ENCODE measurements at regions of chr11 and their contacts with region 1.

Region 1: DNA sequence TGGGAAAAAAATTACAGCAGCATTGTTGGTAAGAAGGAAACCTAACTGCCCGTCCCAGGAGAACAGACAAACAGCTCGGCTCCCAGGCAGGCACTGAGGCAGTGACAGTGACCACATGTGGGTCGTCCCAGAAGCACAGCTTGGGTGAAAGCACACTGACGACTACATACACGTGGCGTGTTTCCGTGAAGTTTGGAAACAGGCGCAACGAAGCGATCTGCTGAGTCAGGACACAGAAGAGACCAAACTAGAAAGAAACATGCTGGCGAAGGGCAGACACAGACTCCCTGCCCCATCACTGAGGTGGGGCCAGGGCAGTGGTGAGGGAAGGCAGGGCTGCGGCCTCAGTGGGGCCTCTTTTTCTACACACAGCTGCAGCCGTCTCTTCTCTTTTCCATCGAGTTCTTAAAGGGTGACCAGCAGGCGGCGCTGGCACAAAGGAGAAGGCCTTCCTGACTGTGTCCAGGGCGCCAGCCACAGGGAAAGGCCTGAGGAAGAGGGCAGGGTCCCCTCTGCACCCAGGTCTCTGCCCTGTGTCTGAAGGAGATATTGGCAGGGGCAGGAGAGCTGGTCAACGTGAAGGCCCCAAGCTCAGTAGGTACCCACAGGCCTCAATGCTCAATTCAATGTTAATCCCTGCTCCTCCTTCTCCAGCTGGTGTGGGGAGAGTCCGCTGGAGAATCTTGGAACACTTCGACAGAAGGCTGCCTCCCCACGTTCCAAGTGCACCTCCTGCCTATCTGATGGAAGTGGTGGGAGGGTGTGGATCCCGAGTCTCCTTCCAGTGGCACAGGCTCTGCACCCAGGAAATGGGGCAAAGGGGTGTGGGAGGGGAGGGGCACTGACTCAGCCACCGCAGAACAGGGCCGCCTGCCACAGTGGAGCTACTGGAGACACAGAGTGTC is 19.9 kb downstream of the CARS1 start:
- DNase-seq: peak; percentile 66 to 76 (median 72)
- H3K4me3 ChIP-seq: peak overlapping the region in 1 of 3 experiments; percentile 57
- H3K4me3 Mint-ChIP-seq: peak overlapping the region; percentile 67 to 77
- H3K27ac ChIP-seq: peak overlapping the region; percentile 58 to 77
- H3K27ac Mint-ChIP-seq: peak overlapping the region; percentile 86 to 96 (median 94)
- H3K4me1 ChIP-seq: peaks cover 31% of the 10 kb centered on the region in 2 donors
- H3K4me1 Mint-ChIP-seq: peaks cover 39% of the 10 kb centered on the region
- H3K27me3 ChIP-seq: no peaks in the 10 kb centered on the region
- H3K27me3 Mint-ChIP-seq: peaks cover 0 to 2% (median 0%) of the 10 kb centered on the region in 3 donors
- CTCF ChIP-seq: peak; percentile 96

Region 2: DNA sequence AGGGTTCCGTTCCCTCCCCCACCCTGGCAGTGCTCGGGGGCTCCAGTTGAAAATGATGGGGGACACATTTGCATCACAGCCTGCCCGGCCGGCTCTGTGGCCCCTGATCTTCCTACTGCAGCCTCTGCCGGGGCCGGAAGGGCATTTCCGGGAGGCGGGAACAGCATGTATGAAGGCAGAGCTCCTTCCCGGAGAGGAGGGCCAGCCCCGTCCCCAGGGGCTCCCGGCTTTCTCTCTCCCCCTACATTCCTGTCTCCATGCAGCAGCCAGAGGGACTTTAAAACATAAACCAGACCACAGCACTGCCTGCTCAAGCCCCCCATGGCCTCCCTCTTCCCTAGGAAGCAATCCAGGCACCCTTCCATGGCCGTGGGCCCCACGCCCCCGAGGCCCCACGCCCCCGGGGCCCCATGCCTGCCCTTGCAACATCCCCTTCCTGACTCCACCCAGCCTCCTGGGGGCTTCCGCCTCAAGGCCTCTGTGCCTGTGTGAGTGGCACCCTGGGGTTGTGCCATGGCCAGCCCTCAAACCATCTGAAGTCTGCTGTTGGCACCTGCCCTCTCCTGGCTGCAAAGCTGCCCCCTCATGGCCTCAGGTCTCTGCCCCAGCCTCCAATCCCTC is 224.8 kb before region 1 on chr11:
- intact Hi-C with region 1: no loop called
- DNase-seq: peak; percentile 27 to 41 (median 33)
- H3K4me3 ChIP-seq: peak overlapping the region; percentile 34 to 77 (median 43)
- H3K4me3 Mint-ChIP-seq: peak overlapping the region; percentile 74 to 87
- H3K27ac ChIP-seq: peak overlapping the region; percentile 75 to 86
- H3K27ac Mint-ChIP-seq: peak overlapping the region; percentile 75 to 94 (median 90)
- H3K4me1 ChIP-seq: peaks cover 35% of the 10 kb centered on the region in 2 donors
- H3K4me1 Mint-ChIP-seq: peaks cover 46% of the 10 kb centered on the region
- H3K27me3 ChIP-seq: no peaks in the 10 kb centered on the region
- H3K27me3 Mint-ChIP-seq: peaks cover 0 to 6% (median 1%) of the 10 kb centered on the region in 3 donors
- CTCF ChIP-seq: no peak

Region 3: GRCh38 chr11:2930704-2931428 is 106.4 kb before region 1 on chr11:
- intact Hi-C with region 1: loop called in 1 of 2 experiments (anchors 2 kb)
- DNase-seq: peak; percentile 43 to 63 (median 61)
- H3K4me3 ChIP-seq: peak overlapping the region; percentile 38 to 73 (median 63)
- H3K4me3 Mint-ChIP-seq: peak overlapping the region; percentile 87 to 92
- H3K27ac ChIP-seq: peak overlapping the region; percentile 61 to 92
- H3K27ac Mint-ChIP-seq: peak overlapping the region; percentile 73 to 97 (median 96)
- H3K4me1 ChIP-seq: peaks cover 50 to 66% of the 10 kb centered on the region in 2 donors
- H3K4me1 Mint-ChIP-seq: peaks cover 41% of the 10 kb centered on the region
- H3K27me3 ChIP-seq: peaks cover 8 to 32% of the 10 kb centered on the region in 2 donors
- H3K27me3 Mint-ChIP-seq: peaks cover 32 to 53% (median 35%) of the 10 kb centered on the region in 3 donors
- CTCF ChIP-seq: peak; percentile 92

Region 4: GRCh38 chr11:2975594-2975993 is 61.7 kb before region 1 on chr11:
- intact Hi-C with region 1: loop called in 1 of 2 experiments (anchors 10 kb)
- DNase-seq: peak; percentile 33 to 54 (median 40)
- H3K4me3 ChIP-seq: no peak overlapping the region
- H3K4me3 Mint-ChIP-seq: no peak overlapping the region
- H3K27ac ChIP-seq: peak overlapping the region in 1 of 2 donors; percentile 34
- H3K27ac Mint-ChIP-seq: peak overlapping the region in 5 of 7 donors; percentile 19 to 55 (median 32)
- H3K4me1 ChIP-seq: no peaks in the 10 kb centered on the region
- H3K4me1 Mint-ChIP-seq: peaks cover 2% of the 10 kb centered on the region
- H3K27me3 ChIP-seq: no peaks in the 10 kb centered on the region
- H3K27me3 Mint-ChIP-seq: no peaks in the 10 kb centered on the region
- CTCF ChIP-seq: peak; percentile 70

Region 5: DNA sequence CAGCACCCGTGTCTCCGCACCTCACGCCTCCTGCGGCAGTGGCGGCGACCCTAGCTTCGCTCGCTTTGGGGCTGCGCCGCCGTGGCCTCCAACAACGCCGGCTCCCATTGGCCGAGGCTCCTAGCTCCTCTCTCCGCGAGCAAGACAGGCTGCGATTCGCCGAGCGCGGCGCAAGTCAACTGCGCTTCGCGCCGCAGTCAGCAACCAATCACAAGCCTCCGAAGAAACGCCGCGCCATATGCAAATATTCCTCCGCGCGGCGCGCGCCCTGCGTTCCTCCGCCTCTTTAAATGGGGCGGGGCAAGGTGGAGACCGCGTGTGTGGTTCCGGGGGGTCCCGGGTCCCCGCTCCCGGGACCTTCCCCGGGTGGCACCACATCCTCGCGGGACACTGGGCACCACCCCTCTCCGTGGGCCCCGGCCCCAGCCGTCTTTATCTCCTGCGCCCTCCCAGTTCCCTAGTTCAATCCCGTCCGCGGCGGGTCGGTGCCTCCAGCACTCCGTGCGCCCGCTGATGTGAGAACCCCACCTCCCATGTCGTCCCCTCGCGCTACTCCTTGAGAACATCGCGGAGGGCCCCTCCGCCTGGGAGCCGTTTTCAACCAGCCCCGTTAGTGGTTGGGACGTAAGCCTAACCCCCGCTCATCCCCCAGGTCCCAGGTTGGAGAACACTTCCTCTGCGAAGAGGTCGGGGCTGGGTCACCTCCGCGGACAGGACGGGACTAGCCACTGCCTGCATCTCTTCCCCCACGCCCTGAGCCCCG is 44.9 kb before region 1 on chr11 and contains the start of gene NAP1L4:
- intact Hi-C with region 1: loop called in 1 of 2 experiments (anchors 5 kb)
- DNase-seq: peak; percentile 93 to 96 (median 93)
- H3K4me3 ChIP-seq: peak within 1 kb of the TSS; percentile 75 to 90 (median 86)
- H3K4me3 Mint-ChIP-seq: peak within 1 kb of the TSS; percentile 97 to 99
- H3K27ac ChIP-seq: peak within 1 kb of the TSS; percentile 83 to 87
- H3K27ac Mint-ChIP-seq: peak within 1 kb of the TSS; percentile 94 to 99 (median 98)
- H3K4me1 ChIP-seq: peaks cover 38 to 48% of the 10 kb centered on the region in 2 donors
- H3K4me1 Mint-ChIP-seq: peaks cover 45% of the 10 kb centered on the region
- H3K27me3 ChIP-seq: no peaks in the 10 kb centered on the region
- H3K27me3 Mint-ChIP-seq: peaks cover 0 to 2% (median 1%) of the 10 kb centered on the region in 3 donors
- CTCF ChIP-seq: no peak
- polyA plus RNA-seq, gene NAP1L4: 42.1 to 44.9 (median 44.9) TPM

Region 6: DNA sequence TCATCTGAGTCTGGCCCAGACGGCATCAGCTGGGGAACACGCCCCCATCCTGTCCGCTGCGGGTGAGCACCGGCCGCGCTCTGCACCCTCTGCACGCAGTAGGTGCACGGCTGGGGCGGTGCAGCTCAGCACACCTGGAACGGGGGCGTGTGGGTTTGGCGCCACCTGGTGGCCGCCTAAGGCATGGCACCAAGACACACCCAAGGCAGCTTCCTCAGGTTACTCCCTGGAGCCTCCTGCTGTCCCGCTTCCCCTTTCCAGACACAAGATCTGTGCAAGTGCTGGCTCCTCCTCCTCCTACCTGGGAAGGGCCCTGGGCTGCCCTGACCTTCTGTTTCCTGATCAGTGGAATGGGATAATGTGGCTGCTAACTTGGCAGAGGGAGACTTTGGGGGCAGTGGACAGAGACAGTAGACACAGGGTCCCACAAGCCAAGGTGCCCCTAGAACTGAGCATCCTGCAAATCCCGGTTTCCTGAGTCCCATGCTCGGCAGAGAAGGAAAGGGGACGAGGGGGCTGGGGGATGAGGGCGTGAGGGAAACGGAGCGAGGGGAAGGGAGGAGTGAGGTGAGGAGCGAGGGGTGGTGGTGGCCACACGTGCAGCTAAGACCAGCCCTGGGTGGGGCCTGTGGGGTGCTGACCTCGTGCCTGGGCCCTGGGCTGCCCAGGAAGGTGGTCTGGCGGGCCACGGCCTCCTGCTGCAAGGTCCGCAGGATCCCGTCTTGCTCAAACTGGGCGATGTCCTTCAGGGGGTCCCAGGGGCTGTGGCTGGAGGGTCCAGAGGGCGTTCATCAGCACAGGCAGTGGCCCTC is 54.7 kb after region 1 on chr11:
- intact Hi-C with region 1: loop called (anchors 2 to 5 kb)
- DNase-seq: peak; percentile 56 to 78 (median 68)
- H3K4me3 ChIP-seq: no peak overlapping the region
- H3K4me3 Mint-ChIP-seq: no peak overlapping the region
- H3K27ac ChIP-seq: no peak overlapping the region
- H3K27ac Mint-ChIP-seq: peak overlapping the region in 1 of 7 donors; percentile 71
- H3K4me1 ChIP-seq: peaks cover 4 to 6% of the 10 kb centered on the region in 2 donors
- H3K4me1 Mint-ChIP-seq: peaks cover 10% of the 10 kb centered on the region
- H3K27me3 ChIP-seq: no peaks in the 10 kb centered on the region
- H3K27me3 Mint-ChIP-seq: no peaks in the 10 kb centered on the region
- CTCF ChIP-seq: peak; percentile 100

Region 7: GRCh38 chr11:3217676-3218482 is 180.6 kb after region 1 on chr11:
- intact Hi-C with region 1: loop called in 1 of 2 experiments (anchors 5 kb)
- DNase-seq: no peak
- H3K4me3 ChIP-seq: no peak overlapping the region
- H3K4me3 Mint-ChIP-seq: no peak overlapping the region
- H3K27ac ChIP-seq: no peak overlapping the region
- H3K27ac Mint-ChIP-seq: no peak overlapping the region
- H3K4me1 ChIP-seq: no peaks in the 10 kb centered on the region
- H3K4me1 Mint-ChIP-seq: peaks cover 7% of the 10 kb centered on the region
- H3K27me3 ChIP-seq: peaks cover 0 to 4% of the 10 kb centered on the region in 2 donors
- H3K27me3 Mint-ChIP-seq: peaks cover 18 to 42% (median 31%) of the 10 kb centered on the region in 3 donors
- CTCF ChIP-seq: no peak